Gastrocnemius medialis (tissue), 4 donors: ENCODE measurements at regions of chr1 and their contacts with region 1.

Region 1: DNA sequence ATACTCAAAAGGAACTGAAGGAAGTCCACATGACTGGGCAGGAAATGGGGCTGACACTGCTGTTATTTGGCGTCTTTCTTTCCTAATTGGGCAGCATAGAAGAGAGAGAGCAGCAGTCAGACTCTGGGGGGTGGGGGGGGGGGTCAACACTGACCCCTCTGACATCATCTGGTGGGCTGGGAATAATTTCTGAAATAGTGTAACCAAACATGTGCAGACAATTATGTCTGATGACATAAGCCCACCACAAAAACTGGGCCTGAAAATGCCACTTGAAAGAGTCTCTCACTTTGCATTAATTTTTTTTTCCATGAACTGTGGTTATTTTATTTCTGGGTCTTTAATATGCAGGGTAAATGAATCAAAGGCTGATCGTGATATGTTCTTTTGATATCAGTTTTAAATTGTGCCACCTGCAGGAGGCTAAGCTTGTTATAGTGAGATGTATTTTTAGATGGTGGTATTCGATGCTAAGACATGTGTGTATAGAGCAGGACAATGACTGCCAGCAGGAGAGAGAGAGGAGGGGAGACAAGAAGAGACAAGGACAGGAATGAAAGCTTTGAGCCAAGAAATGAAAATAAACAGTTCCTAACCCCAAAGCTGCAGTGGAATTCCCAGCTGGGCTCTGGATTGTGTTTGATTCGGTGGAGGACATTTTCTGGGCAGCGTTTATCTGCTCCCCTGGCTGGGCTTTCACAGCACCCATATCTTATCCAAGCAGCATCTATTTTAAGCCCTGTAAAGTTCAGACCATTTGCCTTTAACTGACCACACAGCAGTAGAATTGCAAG is 264.7 kb downstream of the PBX1 start:
- DNase-seq: no peak
- ATAC-seq: peak; percentile 83 to 93
- H3K4me3 ChIP-seq: peak overlapping the region in 2 of 4 donors; percentile 22
- H3K27ac ChIP-seq: peak overlapping the region; percentile 69 to 78 (median 74)
- H3K4me1 ChIP-seq: peaks cover 20 to 29% of the 10 kb centered on the region in 2 donors
- H3K27me3 ChIP-seq: no peaks in the 10 kb centered on the region
- CTCF ChIP-seq: peak in 3 of 5 experiments; percentile 16 to 33 (median 17)
- POLR2A ChIP-seq: no peak

Region 2: GRCh38 chr1:164518692-164519332 is 304.9 kb before region 1 on chr1:
- in situ Hi-C with region 1: no loop called
- intact Hi-C with region 1: loop called (anchors 5 kb)
- DNase-seq: no peak
- ATAC-seq: no peak
- H3K4me3 ChIP-seq: no peak overlapping the region
- H3K27ac ChIP-seq: no peak overlapping the region
- H3K4me1 ChIP-seq: peaks cover 14 to 16% of the 10 kb centered on the region in 2 donors
- H3K27me3 ChIP-seq: no peaks in the 10 kb centered on the region
- CTCF ChIP-seq: no peak
- POLR2A ChIP-seq: no peak